ENCODE measurements at regions of chr17 and their contacts with region 1.

Region 1: GRCh38 chr17:1516388-1517161 is at the start of gene INPP5K:
- DNase-seq: peak; percentile 99
- ATAC-seq: peak; percentile 93
- H3K4me3 Mint-ChIP-seq: peak within 1 kb of the TSS; percentile 86
- H3K27ac Mint-ChIP-seq: peak within 1 kb of the TSS; percentile 86
- H3K4me1 Mint-ChIP-seq: peaks cover 22% of the 10 kb centered on the region
- H3K27me3 Mint-ChIP-seq: no peaks in the 10 kb centered on the region
- total RNA-seq, gene INPP5K: 37.6 to 39.6 TPM

Region 2: GRCh38 chr17:1399679-1400512 is 116.7 kb before region 1 on chr17 and contains the start of gene YWHAE:
- CTCF ChIA-PET with region 1: interaction called, 10 read pairs
- POLR2A ChIA-PET with region 1: interaction called, 21 read pairs
- DNase-seq: peak; percentile 97
- ATAC-seq: peak; percentile 95
- H3K4me3 Mint-ChIP-seq: peak within 1 kb of the TSS; percentile 94
- H3K27ac Mint-ChIP-seq: peak within 1 kb of the TSS; percentile 96
- H3K4me1 Mint-ChIP-seq: peaks cover 24% of the 10 kb centered on the region
- H3K27me3 Mint-ChIP-seq: no peaks in the 10 kb centered on the region
- total RNA-seq, gene YWHAE: 393 to 414 TPM

Region 3: GRCh38 chr17:1488030-1488863 is 28.3 kb before region 1 on chr17:
- CTCF ChIA-PET with region 1: interaction called, 16 read pairs
- POLR2A ChIA-PET with region 1: interaction called, 7 read pairs
- DNase-seq: peak; percentile 72
- ATAC-seq: peak; percentile 30
- H3K4me3 Mint-ChIP-seq: peak overlapping the region; percentile 70
- H3K27ac Mint-ChIP-seq: peak overlapping the region; percentile 34
- H3K4me1 Mint-ChIP-seq: peaks cover 39% of the 10 kb centered on the region
- H3K27me3 Mint-ChIP-seq: no peaks in the 10 kb centered on the region

Region 4: DNA sequence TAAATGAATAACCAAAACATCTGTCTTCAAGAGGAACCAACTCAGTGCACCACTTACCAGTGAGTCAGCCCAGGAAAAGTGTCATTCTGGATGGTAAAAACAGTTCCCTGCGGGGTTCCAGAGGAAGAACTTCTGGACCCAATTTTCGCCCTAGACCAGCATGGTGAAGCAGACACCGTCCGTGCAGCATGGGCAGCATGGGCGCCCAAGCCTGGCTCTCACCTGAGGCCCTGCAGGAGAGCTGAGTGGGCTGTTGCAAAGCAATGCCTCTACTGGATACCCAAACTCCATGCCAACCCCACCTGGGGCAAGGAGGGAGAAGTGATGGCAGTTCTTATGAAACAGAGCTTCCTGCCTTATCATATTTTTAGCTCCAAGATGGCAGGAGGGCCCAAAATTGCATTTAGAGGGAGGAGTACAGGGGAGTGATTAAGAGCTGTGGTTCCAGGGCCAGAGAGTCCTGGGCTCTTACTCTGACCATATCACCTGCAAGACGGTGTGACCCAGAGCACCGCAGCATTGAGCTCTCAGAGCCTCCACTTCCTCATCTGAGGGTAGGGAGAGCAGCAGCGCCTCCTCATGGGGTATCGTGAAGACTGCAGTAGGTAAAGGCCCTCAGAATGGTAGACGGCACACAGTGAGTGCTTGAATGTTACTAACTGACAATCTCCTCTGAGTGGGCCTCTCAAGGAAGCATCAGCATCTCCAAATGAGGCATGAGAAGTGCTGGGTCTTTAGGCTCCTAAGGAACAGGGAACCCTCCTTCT is 16.4 kb after region 1 on chr17:
- CTCF ChIA-PET with region 1: interaction called, 22 read pairs
- POLR2A ChIA-PET with region 1: interaction called, 12 read pairs
- DNase-seq: peak; percentile 53
- ATAC-seq: peak; percentile 61
- H3K4me3 Mint-ChIP-seq: no peak overlapping the region
- H3K27ac Mint-ChIP-seq: no peak overlapping the region
- H3K4me1 Mint-ChIP-seq: no peaks in the 10 kb centered on the region
- H3K27me3 Mint-ChIP-seq: no peaks in the 10 kb centered on the region

Measured in activated CD8-positive, alpha-beta T cell treated with anti-CD3 and anti-CD28 coated beads, Interleukin-2, amount 10 ng/mL, durations not matched to agents 7 days and 5 days (primary cell).